ENCODE measurements at regions of chr13 and their contacts with region 1.

Region 1: DNA sequence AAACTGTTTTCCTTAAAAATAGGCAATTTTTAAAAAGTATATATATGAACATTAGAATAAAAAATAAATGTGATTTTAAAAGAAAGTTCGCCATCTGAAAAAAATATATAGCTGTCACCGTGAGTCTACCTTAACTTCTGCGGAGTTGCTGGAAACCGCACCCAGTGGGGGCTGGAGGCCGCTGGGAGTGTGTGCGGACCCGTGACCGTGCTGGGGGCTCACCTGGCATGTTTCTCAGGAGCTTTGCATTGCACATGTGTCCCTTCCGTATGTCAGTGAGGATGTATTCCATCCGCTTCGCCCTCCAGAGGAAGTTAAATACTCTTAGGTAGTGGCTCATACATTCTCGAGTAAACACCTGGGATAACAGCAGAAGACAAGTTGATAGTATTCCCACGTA is 71.7 kb downstream of the TUBGCP3 start:
- DNase-seq: no peak
- H3K4me3 ChIP-seq: no peak overlapping the region
- H3K27ac ChIP-seq: no peak overlapping the region
- H3K4me1 ChIP-seq: no peaks in the 10 kb centered on the region
- H3K27me3 ChIP-seq: no peaks in the 10 kb centered on the region
- CTCF ChIP-seq: no peak

Region 2: GRCh38 chr13:112690166-112690929 is 174.1 kb after region 1 on chr13:
- CTCF ChIA-PET with region 1: no interaction called
- POLR2A ChIA-PET with region 1: interaction called, 13 read pairs
- intact Hi-C with region 1: no loop called
- DNase-seq: no peak
- H3K4me3 ChIP-seq: peak overlapping the region; percentile 63
- H3K27ac ChIP-seq: peak overlapping the region; percentile 23
- H3K4me1 ChIP-seq: no peaks in the 10 kb centered on the region
- H3K27me3 ChIP-seq: peaks cover 14% of the 10 kb centered on the region
- CTCF ChIP-seq: no peak